ENCODE measurements at regions of chr2 and their contacts with region 1.

Region 1: DNA sequence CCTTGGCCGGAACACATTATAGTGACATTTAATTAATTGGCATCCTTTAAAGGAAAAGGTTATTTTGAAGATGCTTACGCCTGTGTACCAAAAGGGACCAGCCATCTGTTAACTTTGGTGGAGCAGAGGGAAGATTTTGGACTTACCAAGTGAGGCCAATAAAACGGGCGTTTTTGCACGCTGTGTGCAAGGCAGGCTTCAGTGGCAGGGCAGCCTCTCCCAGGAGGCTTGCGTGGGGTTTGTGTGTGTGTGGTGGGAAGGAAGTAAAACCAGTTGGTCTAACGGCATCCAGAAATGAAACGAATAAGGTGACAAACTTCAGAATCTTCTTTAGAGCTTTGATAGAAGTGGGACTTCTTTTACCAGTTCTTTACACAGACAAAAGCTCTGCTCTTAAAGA is 191.7 kb downstream of the PRKCE start:
- DNase-seq: peak in 1 of 10 donors; percentile 36
- H3K4me3 ChIP-seq: no peak overlapping the region
- H3K27ac ChIP-seq: peak overlapping the region in 9 of 59 donors; percentile 1 to 87 (median 27)
- H3K27me3 ChIP-seq: no peaks in the 10 kb centered on the region
- CTCF ChIP-seq: no peak

Region 2: GRCh38 chr2:45353879-45354278 is 489.3 kb before region 1 on chr2:
- intact Hi-C with region 1: no loop called
- DNase-seq: no peak
- H3K4me3 ChIP-seq: no peak overlapping the region
- H3K27ac ChIP-seq: no peak overlapping the region
- H3K27me3 ChIP-seq: no peaks in the 10 kb centered on the region
- CTCF ChIP-seq: no peak

Region 3: DNA sequence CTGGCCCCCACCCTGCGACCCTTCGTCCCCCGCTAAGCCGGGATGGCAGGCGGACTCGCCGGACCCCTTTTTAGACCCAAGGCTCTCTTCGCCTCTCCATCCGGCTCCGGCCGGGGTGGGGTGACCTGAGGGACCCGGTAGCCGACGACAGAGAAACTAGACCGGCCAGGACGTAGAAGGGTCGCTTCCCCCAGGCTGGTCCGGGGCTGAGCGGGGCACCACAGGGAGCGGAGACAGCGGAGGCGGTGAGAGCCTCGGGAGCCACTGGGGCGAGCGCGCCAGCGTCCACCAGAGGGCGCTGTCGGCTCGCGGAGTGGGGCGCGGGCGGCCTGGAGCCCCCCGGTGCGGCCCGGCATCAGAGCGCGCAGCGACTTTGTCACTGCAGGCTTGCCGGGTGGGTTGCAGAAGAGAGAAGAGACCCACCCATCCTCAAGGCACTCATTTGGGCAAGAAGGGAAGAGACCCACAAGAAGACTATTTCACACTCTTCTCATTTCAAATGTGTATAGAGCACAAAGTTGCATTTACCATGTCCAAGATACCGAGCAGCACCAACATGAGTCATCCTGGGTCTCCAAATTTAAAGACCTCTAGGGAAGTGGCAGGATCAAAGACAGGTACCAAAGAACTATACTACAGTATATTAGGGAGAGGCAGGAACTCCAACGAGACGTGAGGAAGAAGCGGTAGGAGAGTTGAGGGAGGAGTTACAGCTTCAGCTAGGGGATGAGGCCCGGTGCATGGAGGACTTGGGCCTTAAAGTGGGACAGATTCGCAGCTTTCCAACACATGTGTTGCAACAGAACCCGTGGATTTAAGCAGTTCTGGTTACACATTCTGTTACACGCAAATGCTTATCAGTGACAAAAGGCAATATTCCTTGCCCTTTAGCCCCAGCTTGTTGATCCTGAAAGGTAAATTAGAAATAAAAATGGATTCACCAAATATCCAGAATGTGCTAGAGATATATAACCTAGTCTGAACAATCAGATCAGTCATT is 199.3 kb before region 1 on chr2:
- intact Hi-C with region 1: loop called in 1 of 2 experiments (anchors 5 kb)
- DNase-seq: peak in 9 of 10 donors; percentile 30 to 85 (median 51)
- H3K4me3 ChIP-seq: peak overlapping the region; percentile 35 to 88 (median 66)
- H3K27ac ChIP-seq: peak overlapping the region in 5 of 59 donors; percentile 27 to 76 (median 63)
- H3K27me3 ChIP-seq: peaks cover 0 to 4% (median 0%) of the 10 kb centered on the region in 45 donors
- CTCF ChIP-seq: peak; percentile 80 to 100 (median 97)

Region 4: DNA sequence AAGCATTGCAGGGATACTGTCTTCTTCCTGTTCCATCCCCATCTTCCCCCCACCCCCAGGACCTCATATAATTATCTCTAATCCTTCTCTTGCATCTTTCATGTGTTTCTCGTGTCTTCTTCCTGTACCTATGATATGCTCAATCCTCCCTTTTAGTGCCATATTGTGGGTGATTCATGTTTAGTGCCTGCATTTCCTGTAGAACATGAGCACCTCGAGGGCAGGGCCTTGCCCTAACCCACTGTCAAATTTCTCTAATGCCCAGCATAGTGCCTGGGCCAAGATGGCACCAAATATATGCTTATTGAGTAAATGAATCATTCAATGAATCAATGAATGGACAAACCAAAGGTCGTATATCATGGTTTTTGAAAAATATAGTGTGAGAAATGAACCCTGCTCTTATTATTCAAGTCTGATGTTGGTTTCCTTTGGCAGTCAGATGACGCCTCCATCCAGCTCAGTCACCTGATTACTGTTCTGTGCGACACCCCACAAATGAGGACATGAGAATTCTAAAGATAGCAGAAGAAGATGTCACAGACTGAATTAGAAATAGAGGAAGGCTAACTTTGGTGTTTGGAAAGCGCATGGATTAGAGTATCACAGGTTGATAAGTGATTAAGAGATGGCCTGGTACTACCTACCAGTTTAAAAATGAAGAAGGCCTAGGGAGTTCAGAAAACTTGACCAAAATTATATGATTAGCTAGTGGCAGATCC is 86.7 kb after region 1 on chr2:
- intact Hi-C with region 1: loop called (anchors 5 kb)
- DNase-seq: peak in 1 of 10 donors; percentile 52
- H3K4me3 ChIP-seq: peak overlapping the region in 6 of 59 donors; percentile 9 to 41 (median 24)
- H3K27ac ChIP-seq: peak overlapping the region in 50 of 59 donors; percentile 11 to 91 (median 72)
- H3K27me3 ChIP-seq: no peaks in the 10 kb centered on the region
- CTCF ChIP-seq: no peak

Region 5: GRCh38 chr2:45935791-45936622 is 92.9 kb after region 1 on chr2:
- intact Hi-C with region 1: loop called in 1 of 2 experiments (anchors 5 kb)
- DNase-seq: peak; percentile 64 to 90 (median 86)
- H3K4me3 ChIP-seq: peak overlapping the region in 32 of 59 donors; percentile 1 to 46 (median 23)
- H3K27ac ChIP-seq: peak overlapping the region in 18 of 59 donors; percentile 4 to 69 (median 30)
- H3K27me3 ChIP-seq: no peaks in the 10 kb centered on the region
- CTCF ChIP-seq: peak; percentile 65 to 94 (median 85)